ENCODE measurements at regions of chr1 and their contacts with region 1.

Region 1: DNA sequence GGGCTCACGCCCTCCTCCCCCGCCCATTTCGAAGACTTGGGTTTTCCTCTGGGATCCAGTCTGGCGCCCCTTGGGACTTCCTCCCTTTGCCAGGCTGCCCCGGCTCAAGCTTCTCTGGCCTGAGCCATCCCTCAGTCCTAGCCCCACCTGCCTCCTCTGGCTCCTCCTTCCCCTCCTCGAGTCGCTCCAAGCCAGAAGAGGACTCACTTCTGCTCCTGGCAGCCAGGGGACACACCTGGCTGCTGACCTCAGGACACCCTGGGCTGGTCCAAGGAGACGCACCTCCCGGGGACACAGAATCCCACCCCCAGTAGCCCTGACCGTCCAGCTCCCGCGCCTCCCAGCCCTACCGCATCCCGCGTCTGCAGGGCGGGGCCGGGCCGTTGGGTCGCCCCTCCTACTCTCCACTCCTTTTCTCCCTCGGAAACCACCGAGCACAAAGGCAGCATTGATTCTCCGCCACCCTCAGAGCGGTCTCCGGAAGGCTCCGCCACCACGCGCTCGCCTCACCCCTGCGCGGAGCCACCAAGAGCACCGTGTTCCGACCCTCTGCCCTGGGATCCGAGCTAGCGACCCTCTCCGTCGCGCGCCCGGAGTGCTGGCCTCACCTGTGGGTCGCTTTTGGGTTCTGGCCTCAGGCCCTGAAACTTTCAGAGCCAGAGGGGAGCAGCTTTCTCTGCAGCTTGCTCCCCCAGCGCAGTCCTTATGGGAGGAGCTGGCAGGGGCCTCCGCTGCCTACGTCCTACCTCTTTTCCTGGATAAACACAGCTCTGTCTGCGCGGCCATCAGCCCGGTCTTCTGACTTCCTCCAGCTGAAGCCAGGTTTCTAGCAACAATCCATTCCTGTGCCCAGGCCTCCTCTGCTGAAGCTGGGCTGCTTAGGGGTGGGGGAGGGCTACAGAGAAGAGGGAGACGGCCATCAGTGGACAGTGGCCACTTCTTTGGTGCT is at the start of gene C2CD4D:
- DNase-seq: no peak
- ATAC-seq: no peak
- H3K4me3 ChIP-seq: no peak within 1 kb of the TSS
- H3K27ac ChIP-seq: no peak within 1 kb of the TSS
- H3K4me1 ChIP-seq: 0 out of 3 replicates have a peak, but pooled peaks cover 3% of the 10 kb centered on the region
- CTCF ChIP-seq: no peak
- EP300 ChIP-seq: no peak
- POLR2A ChIP-seq: no peak
- RAD21 ChIP-seq: no peak
- polyA plus RNA-seq, gene C2CD4D: not detected in 2 replicates

Region 2: DNA sequence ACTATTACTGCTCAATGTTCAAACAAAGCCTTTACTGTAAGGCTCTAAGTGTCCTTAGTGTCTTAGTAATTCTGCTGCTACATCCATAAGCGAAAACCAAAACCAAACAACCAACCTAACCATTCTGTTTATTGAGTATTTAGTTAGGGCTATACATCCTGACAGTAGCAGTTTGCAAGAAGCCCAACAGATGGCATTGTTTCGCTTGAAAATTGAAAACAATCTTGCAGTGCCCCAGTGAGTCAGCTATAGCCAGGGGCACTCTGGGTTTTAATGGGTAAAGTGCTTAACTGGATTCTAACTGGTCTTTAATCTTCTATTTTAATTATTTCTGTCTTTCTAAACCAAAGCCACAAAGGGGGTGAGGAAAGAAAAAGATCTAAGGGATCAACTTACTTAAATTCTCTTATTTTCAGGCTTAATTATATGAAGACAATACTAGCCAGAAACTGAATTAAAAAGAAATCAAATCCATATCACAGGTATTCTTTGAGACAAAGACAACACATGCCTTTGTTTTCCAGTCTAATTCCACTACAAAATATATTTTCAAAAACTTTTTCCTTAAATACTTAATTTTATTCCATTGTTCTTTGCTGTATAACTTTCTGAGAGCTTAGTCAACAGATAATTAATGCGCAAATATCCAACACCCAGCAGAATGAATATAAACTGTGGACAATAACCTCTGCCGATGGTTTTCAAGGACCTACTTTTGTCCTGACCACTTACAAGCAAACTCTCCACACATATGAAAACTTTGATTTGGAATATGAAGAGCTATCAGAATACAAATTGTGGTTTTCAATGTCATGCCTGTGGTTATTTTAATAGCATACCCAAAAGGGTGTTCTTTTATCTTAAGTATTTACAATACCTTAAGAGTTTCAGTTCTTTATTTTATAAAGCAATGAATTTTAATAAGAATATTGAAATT is 395.6 kb before region 1 on chr1:
- CTCF ChIA-PET with region 1: interaction called, 10 read pairs
- POLR2A ChIA-PET with region 1: no interaction called
- DNase-seq: peak; percentile 82 to 96
- ATAC-seq: peak; percentile 98 to 99
- H3K4me3 ChIP-seq: no peak overlapping the region
- H3K27ac ChIP-seq: no peak overlapping the region
- H3K4me1 ChIP-seq: peaks cover 20% of the 10 kb centered on the region; the same call in 2 of the 3 replicates
- CTCF ChIP-seq: peak; percentile 84
- EP300 ChIP-seq: no peak
- POLR2A ChIP-seq: no peak
- RAD21 ChIP-seq: peak; percentile 80 to 84

Region 3: GRCh38 chr1:151693076-151693651 is 146.6 kb before region 1 on chr1:
- CTCF ChIA-PET with region 1: interaction called, 17 read pairs
- POLR2A ChIA-PET with region 1: no interaction called
- DNase-seq: peak; percentile 38 to 54
- ATAC-seq: peak; percentile 83 to 90
- H3K4me3 ChIP-seq: no peak overlapping the region
- H3K27ac ChIP-seq: no peak overlapping the region
- H3K4me1 ChIP-seq: no peaks in the 10 kb centered on the region
- CTCF ChIP-seq: peak; percentile 75
- EP300 ChIP-seq: no peak
- POLR2A ChIP-seq: no peak
- RAD21 ChIP-seq: peak; percentile 73 to 86

Region 4: DNA sequence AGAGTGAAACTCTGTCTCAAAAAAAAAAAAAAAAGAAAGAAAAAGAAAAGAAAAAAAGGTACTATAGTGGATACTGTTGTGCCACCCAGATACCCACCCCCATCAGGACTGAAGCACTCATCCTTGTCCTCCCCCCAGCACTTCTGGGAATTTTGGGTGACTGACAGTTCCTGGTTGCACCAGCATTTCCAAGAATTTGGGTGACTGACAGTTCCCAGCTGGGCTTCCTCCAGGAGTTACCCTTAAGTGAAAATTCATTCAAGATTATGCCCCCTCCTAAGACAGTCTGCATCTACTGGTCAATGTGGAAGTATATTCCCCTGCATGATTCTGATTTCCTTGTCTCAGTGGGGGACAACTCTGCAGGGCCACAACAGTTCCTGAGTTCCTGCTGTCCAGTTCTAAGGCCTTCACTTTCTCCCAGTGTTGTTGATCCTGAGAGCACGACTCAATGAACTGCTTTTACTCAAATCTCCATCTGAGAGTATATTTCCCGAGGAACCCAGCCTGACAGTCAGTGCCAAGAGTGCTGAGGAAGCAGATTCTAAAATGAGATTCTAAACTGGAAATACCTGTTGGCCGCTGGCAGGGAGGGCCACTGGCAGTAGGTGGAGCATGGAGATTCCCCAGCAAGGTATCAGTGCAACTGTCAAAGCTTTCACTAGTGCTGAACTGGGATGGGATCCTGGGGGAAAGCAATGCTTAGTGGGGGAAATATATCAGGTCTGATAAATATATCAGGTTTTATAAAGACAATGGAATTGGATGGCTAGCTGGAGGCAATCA is 99.9 kb before region 1 on chr1:
- CTCF ChIA-PET with region 1: interaction called, 10 read pairs
- POLR2A ChIA-PET with region 1: no interaction called
- DNase-seq: no peak
- ATAC-seq: no peak
- H3K4me3 ChIP-seq: no peak overlapping the region
- H3K27ac ChIP-seq: no peak overlapping the region
- H3K4me1 ChIP-seq: no peaks in the 10 kb centered on the region
- CTCF ChIP-seq: no peak
- EP300 ChIP-seq: no peak
- POLR2A ChIP-seq: no peak
- RAD21 ChIP-seq: no peak

Region 5: GRCh38 chr1:151762941-151763921 is 76.5 kb before region 1 on chr1 and contains the start of gene MRPL9:
- CTCF ChIA-PET with region 1: interaction called, 17 read pairs
- POLR2A ChIA-PET with region 1: interaction called, 3 read pairs
- DNase-seq: peak; percentile 79 to 92
- ATAC-seq: peak; percentile 98 to 100
- H3K4me3 ChIP-seq: peak within 1 kb of the TSS; percentile 81
- H3K27ac ChIP-seq: peak within 1 kb of the TSS; percentile 93 to 95
- H3K4me1 ChIP-seq: peaks cover 12% of the 10 kb centered on the region
- CTCF ChIP-seq: no peak
- EP300 ChIP-seq: no peak
- POLR2A ChIP-seq: peak; percentile 65
- RAD21 ChIP-seq: peak in 1 of 2 experiments; percentile 23; a peak in 1 of 5 replicates
- polyA plus RNA-seq, gene MRPL9: 120 and 146 TPM in 2 replicates

Region 6: GRCh38 chr1:151820940-151821339 is 18.8 kb before region 1 on chr1:
- CTCF ChIA-PET with region 1: interaction called, 77 read pairs
- POLR2A ChIA-PET with region 1: no interaction called
- DNase-seq: no peak
- ATAC-seq: no peak
- H3K4me3 ChIP-seq: no peak overlapping the region
- H3K27ac ChIP-seq: peak overlapping the region in 1 of 2 experiments; percentile 70; a peak in 4 of 6 replicates
- H3K4me1 ChIP-seq: peaks cover 16% of the 10 kb centered on the region
- CTCF ChIP-seq: no peak
- EP300 ChIP-seq: no peak
- POLR2A ChIP-seq: no peak
- RAD21 ChIP-seq: no peak

Region 7: GRCh38 chr1:151915061-151915686 is 75.4 kb after region 1 on chr1:
- CTCF ChIA-PET with region 1: no interaction called
- POLR2A ChIA-PET with region 1: no interaction called
- DNase-seq: no peak
- ATAC-seq: no peak
- H3K4me3 ChIP-seq: no peak overlapping the region
- H3K27ac ChIP-seq: no peak overlapping the region
- H3K4me1 ChIP-seq: no peaks in the 10 kb centered on the region
- CTCF ChIP-seq: no peak
- EP300 ChIP-seq: no peak
- POLR2A ChIP-seq: no peak
- RAD21 ChIP-seq: no peak